HEK293T (cell line): ENCODE measurements at regions of chr7 and their contacts with region 1.

Region 1: GRCh38 chr7:55280031-55280454 is 85.1 kb upstream of the LANCL2 start:
- DNase-seq: peak; percentile 71

Region 2: DNA sequence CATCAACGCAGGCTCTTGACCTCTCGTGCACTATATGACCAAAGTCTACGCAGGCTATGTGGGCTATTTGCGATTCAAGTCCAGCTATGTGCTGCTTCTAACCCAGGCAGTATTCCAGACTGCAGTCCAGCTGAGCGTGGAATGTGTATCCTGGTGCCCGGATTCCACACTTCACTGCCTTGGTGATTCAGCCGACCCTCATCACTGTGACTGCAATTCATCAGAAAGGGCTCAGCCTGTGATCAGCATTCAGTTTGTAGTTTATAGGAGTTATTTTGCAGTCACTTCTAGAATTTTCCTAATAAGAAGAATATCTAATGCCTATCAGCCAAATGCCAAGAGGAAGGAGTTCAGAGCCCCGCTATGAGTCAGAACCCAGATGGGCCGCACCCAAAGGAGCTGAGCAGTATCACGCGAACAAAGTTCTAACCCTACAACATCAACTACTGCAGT is 34.7 kb before region 1 on chr7:
- CTCF ChIA-PET with region 1: no interaction called
- POLR2A ChIA-PET with region 1: no interaction called
- DNase-seq: no peak

Region 3: DNA sequence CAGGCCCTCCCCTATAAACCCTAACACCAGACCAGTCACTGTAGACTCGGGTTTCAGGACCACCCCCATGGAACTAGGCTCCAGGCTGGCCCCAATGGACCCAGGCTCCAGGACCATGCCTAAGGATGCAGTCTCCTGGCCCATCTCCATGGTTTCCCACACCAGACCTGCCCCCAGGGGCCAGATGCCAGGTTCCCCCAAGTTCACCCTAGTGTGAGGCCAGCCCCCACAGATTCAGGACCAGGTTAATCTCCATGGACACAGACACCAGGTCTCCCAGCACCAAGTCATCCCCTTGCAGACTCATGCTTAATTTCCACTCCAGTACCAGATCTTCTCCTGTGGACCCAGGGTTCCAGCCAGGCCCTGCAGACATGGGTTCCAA is 18.7 kb before region 1 on chr7:
- CTCF ChIA-PET with region 1: no interaction called
- POLR2A ChIA-PET with region 1: no interaction called
- DNase-seq: no peak

Region 4: GRCh38 chr7:55415173-55415778 is 135.2 kb after region 1 on chr7:
- CTCF ChIA-PET with region 1: interaction called, 10 read pairs
- POLR2A ChIA-PET with region 1: no interaction called
- DNase-seq: peak; percentile 81